ENCODE measurements at regions of chr17 and their contacts with region 1.

Region 1: DNA sequence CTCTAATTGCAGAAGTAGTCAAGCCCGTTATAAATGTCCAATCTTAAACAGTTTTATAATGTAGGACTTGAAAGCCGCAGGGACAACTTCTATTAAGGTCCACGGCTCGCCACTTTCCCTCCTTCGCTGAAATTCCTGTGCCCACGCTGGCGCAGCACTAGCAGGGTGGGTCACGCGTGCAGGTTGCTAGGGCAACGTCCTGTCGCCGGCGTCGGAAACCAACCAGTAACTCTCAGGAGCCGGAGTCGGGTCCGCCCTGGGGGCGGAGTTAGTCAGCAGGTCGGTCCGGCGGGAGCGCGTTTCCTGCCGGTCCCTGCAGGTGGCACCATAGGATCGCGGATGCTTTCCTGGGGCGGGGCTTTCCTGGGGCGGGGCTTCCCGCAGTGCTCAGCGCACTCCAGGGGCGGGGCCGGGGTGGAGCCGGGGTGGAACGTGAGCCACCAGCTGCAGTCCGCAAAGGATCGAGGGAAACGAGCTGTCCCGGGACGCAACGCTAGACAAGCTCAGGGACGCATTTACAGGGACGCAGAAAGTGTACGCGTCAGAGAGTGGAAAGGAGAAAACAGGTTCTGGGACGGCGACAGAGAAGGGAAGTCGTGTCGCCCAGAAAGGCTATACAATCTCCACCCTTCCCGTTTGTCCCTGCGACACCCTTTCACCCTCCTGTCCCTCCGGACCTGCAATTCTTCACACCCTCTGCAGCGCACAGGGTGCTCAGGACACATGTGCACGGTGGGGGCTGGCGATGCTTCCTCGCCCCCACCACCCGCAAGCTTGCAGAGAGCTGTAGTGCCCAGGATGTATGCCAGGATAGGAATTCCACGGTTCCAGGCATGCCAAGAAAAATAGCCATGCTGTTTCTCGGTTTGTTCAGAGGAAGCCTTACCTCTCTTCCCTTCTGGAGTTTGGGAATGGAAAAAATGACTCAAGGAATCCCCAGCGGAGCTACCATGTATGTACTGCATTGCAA is 12.4 kb downstream of the COPZ2 start:
- DNase-seq: peak; percentile 93
- H3K4me3 ChIP-seq: peak overlapping the region; percentile 70
- H3K27ac ChIP-seq: peak overlapping the region; percentile 52
- H3K27me3 ChIP-seq: peaks cover 3% of the 10 kb centered on the region
- CTCF ChIP-seq: peak; percentile 70

Region 2: GRCh38 chr17:47949136-47949759 is 76.0 kb before region 1 on chr17:
- CTCF ChIA-PET with region 1: interaction called, 14 read pairs
- POLR2A ChIA-PET with region 1: no interaction called
- DNase-seq: peak; percentile 63
- H3K4me3 ChIP-seq: peak overlapping the region; percentile 39
- H3K27ac ChIP-seq: peak overlapping the region; percentile 33
- H3K27me3 ChIP-seq: no peaks in the 10 kb centered on the region
- CTCF ChIP-seq: peak; percentile 95

Region 3: GRCh38 chr17:48037036-48037837 is 12.0 kb after region 1 on chr17 and contains the start of gene COPZ2:
- CTCF ChIA-PET with region 1: interaction called, 28 read pairs
- POLR2A ChIA-PET with region 1: interaction called, 9 read pairs
- DNase-seq: no peak
- H3K4me3 ChIP-seq: peak within 1 kb of the TSS; percentile 70
- H3K27ac ChIP-seq: peak within 1 kb of the TSS; percentile 57
- H3K27me3 ChIP-seq: no peaks in the 10 kb centered on the region
- CTCF ChIP-seq: peak; percentile 57
- polyA plus RNA-seq, gene COPZ2: 107 and 122 TPM in 2 replicates

Region 4: GRCh38 chr17:48054238-48055185 is 29.3 kb after region 1 on chr17:
- CTCF ChIA-PET with region 1: interaction called, 33 read pairs
- POLR2A ChIA-PET with region 1: interaction called, 22 read pairs
- DNase-seq: no peak
- H3K4me3 ChIP-seq: peak overlapping the region; percentile 36
- H3K27ac ChIP-seq: peak overlapping the region; percentile 47
- H3K27me3 ChIP-seq: no peaks in the 10 kb centered on the region
- CTCF ChIP-seq: no peak

Region 5: GRCh38 chr17:48074315-48075081 is 49.3 kb after region 1 on chr17:
- CTCF ChIA-PET with region 1: interaction called, 82 read pairs
- POLR2A ChIA-PET with region 1: interaction called, 3 read pairs
- DNase-seq: no peak
- H3K4me3 ChIP-seq: no peak overlapping the region
- H3K27ac ChIP-seq: no peak overlapping the region
- H3K27me3 ChIP-seq: no peaks in the 10 kb centered on the region
- CTCF ChIP-seq: peak; percentile 85

Region 6: GRCh38 chr17:48101012-48101720 is 75.9 kb after region 1 on chr17 and contains the start of gene CBX1:
- CTCF ChIA-PET with region 1: interaction called, 23 read pairs
- POLR2A ChIA-PET with region 1: interaction called, 5 read pairs
- DNase-seq: peak; percentile 84
- H3K4me3 ChIP-seq: peak within 1 kb of the TSS; percentile 95
- H3K27ac ChIP-seq: peak within 1 kb of the TSS; percentile 86
- H3K27me3 ChIP-seq: no peaks in the 10 kb centered on the region
- CTCF ChIP-seq: no peak
- polyA plus RNA-seq, gene CBX1: 57.2 and 68.2 TPM in 2 replicates

Region 7: GRCh38 chr17:48131216-48131824 is 106.1 kb after region 1 on chr17:
- CTCF ChIA-PET with region 1: interaction called, 80 read pairs
- POLR2A ChIA-PET with region 1: interaction called, 4 read pairs
- DNase-seq: peak; percentile 16
- H3K4me3 ChIP-seq: no peak overlapping the region
- H3K27ac ChIP-seq: no peak overlapping the region
- H3K27me3 ChIP-seq: peaks cover 5% of the 10 kb centered on the region
- CTCF ChIP-seq: peak; percentile 91

Region 8: GRCh38 chr17:48194097-48194550 is 168.9 kb after region 1 on chr17:
- CTCF ChIA-PET with region 1: no interaction called
- POLR2A ChIA-PET with region 1: no interaction called
- DNase-seq: peak; percentile 3
- H3K4me3 ChIP-seq: no peak overlapping the region
- H3K27ac ChIP-seq: no peak overlapping the region
- H3K27me3 ChIP-seq: peaks cover 15% of the 10 kb centered on the region
- CTCF ChIP-seq: no peak